ENCODE measurements at regions of chr10 and their contacts with region 1.

Region 1: DNA sequence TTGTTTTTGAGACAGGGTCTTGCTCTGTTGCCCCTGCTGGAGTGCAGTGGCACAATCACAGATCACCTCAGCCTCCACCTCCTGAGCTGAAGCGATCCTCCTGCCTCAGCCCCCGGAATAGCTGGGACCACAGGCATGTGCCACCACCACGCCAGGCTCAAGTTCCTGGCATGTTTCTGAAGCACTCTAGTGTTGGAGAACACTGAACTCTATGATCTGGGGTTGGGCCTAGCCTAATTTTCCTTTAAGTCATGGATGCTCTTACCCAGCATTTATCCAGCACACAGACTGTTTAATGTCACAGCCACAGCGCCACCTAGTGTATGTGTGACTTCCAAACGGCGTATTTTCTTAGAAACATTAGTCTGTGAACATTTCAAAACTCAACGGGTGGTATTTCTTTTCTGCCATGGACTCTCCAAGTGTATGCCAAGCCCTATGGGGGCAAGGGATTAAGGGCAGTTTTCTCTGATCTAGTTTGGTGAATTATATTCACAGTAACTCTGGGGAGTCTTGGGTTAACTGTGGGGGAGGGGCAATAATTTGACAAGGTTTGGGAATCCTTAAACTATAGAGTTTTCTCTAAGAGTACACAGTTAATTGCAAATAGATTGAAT is 91.8 kb downstream of the CREM start:
- DNase-seq: peak; percentile 77
- CTCF ChIP-seq: peak; percentile 85

Region 2: GRCh38 chr10:35124540-35124939 is 93.9 kb before region 1 on chr10:
- in situ Hi-C with region 1: loop called (anchors 5 kb)
- DNase-seq: no peak
- CTCF ChIP-seq: no peak

Measured in GM13977 (cell line).